Naive thymus-derived CD4-positive, alpha-beta T cell (primary cell): ENCODE measurements at regions of chr1 and their contacts with region 1.

Region 1: GRCh38 chr1:23530747-23531561 is at the start of gene E2F2:
- DNase-seq: peak; percentile 61 to 81 (median 78)
- ATAC-seq: peak; percentile 83
- H3K4me3 ChIP-seq: peak within 1 kb of the TSS; percentile 52
- H3K4me3 Mint-ChIP-seq: peak within 1 kb of the TSS; percentile 85 to 97 (median 90)
- H3K27ac ChIP-seq: no peak within 1 kb of the TSS
- H3K27ac Mint-ChIP-seq: peak within 1 kb of the TSS in 7 of 9 donors; percentile 36 to 96 (median 70)
- H3K4me1 ChIP-seq: peaks cover 61 to 71% of the 10 kb centered on the region in 2 donors
- H3K4me1 Mint-ChIP-seq: peaks cover 49 to 76% (median 67%) of the 10 kb centered on the region in 7 donors
- H3K27me3 ChIP-seq: no peaks in the 10 kb centered on the region
- H3K27me3 Mint-ChIP-seq: peaks cover 0 to 4% (median 0%) of the 10 kb centered on the region in 5 donors
- total RNA-seq, gene E2F2: 0.14 to 65.7 (median 2.5) TPM in 4 of 5 experiments, not detected in the other

Region 2: DNA sequence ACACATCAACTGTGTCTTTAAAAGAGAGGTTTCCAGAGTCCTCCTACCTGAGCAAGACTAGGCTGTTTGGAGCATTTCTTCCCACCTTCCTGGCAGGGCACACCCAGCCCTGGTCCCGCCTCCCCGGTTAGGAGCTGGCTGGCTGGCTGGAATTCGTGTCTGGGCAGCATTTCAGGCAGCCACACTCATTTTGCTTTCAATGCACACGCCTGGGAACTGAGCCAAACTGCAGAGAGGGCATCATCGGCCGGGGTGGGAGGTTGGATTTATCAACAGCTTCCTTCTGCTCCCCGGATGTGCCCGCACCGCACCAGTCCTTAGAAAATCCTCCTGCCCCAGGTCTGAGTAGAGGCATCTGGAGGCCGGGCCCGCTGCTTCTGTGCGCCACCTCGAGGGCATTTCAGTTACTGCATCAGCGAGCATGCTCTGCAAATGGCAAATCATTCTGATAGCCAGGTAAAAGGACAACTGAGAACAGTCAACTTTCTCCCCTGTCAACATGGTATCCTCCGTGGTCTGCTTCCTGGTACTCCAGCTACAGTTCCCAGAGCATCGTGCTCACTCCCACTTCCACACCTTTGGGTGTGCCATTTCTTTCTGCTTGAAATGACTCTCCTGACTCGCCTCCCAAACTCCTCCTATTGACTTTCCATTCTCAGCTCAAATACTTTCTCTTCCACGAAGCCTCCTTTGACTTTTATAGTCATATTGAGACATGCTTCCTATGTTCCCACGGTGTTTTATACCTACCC is 127.0 kb before region 1 on chr1:
- CTCF ChIA-PET with region 1: no interaction called
- POLR2A ChIA-PET with region 1: no interaction called
- intact Hi-C with region 1: no loop called
- DNase-seq: peak; percentile 62 to 83 (median 73)
- ATAC-seq: peak; percentile 92
- H3K4me3 ChIP-seq: no peak overlapping the region
- H3K4me3 Mint-ChIP-seq: no peak overlapping the region
- H3K27ac ChIP-seq: no peak overlapping the region
- H3K27ac Mint-ChIP-seq: peak overlapping the region in 5 of 9 donors; percentile 16 to 76 (median 51)
- H3K4me1 ChIP-seq: peaks cover 4 to 9% of the 10 kb centered on the region in 2 donors
- H3K4me1 Mint-ChIP-seq: peaks cover 10 to 14% (median 12%) of the 10 kb centered on the region in 7 donors
- H3K27me3 ChIP-seq: no peaks in the 10 kb centered on the region
- H3K27me3 Mint-ChIP-seq: no peaks in the 10 kb centered on the region

Region 3: GRCh38 chr1:23422241-23423030 is 108.5 kb before region 1 on chr1:
- CTCF ChIA-PET with region 1: no interaction called
- POLR2A ChIA-PET with region 1: interaction called, 3 read pairs
- intact Hi-C with region 1: loop called in 1 of 2 experiments (anchors 5 kb)
- DNase-seq: peak in 8 of 9 donors; percentile 40 to 73 (median 66)
- ATAC-seq: peak; percentile 74
- H3K4me3 ChIP-seq: peak overlapping the region; percentile 59
- H3K4me3 Mint-ChIP-seq: peak overlapping the region; percentile 74 to 96 (median 92)
- H3K27ac ChIP-seq: peak overlapping the region; percentile 65
- H3K27ac Mint-ChIP-seq: peak overlapping the region; percentile 58 to 96 (median 91)
- H3K4me1 ChIP-seq: peaks cover 10 to 20% of the 10 kb centered on the region in 2 donors
- H3K4me1 Mint-ChIP-seq: peaks cover 18 to 45% (median 37%) of the 10 kb centered on the region in 7 donors
- H3K27me3 ChIP-seq: no peaks in the 10 kb centered on the region
- H3K27me3 Mint-ChIP-seq: peaks cover 0 to 36% (median 0%) of the 10 kb centered on the region in 5 donors

Region 4: GRCh38 chr1:23496490-23497181 is 34.3 kb before region 1 on chr1:
- CTCF ChIA-PET with region 1: interaction called, 203 read pairs
- POLR2A ChIA-PET with region 1: interaction called, 4 read pairs
- intact Hi-C with region 1: no loop called
- DNase-seq: no peak
- ATAC-seq: peak; percentile 31
- H3K4me3 ChIP-seq: no peak overlapping the region
- H3K4me3 Mint-ChIP-seq: no peak overlapping the region
- H3K27ac ChIP-seq: no peak overlapping the region
- H3K27ac Mint-ChIP-seq: no peak overlapping the region
- H3K4me1 ChIP-seq: no peaks in the 10 kb centered on the region
- H3K4me1 Mint-ChIP-seq: peaks cover 0 to 5% (median 0%) of the 10 kb centered on the region in 7 donors
- H3K27me3 ChIP-seq: no peaks in the 10 kb centered on the region
- H3K27me3 Mint-ChIP-seq: peaks cover 0 to 14% (median 0%) of the 10 kb centered on the region in 5 donors